ENCODE measurements at regions of chr19 and their contacts with region 1.

Region 1: GRCh38 chr19:41691268-41691970 is 3.3 kb upstream of the CEACAM7 start:
- DNase-seq: peak; percentile 66

Region 2: DNA sequence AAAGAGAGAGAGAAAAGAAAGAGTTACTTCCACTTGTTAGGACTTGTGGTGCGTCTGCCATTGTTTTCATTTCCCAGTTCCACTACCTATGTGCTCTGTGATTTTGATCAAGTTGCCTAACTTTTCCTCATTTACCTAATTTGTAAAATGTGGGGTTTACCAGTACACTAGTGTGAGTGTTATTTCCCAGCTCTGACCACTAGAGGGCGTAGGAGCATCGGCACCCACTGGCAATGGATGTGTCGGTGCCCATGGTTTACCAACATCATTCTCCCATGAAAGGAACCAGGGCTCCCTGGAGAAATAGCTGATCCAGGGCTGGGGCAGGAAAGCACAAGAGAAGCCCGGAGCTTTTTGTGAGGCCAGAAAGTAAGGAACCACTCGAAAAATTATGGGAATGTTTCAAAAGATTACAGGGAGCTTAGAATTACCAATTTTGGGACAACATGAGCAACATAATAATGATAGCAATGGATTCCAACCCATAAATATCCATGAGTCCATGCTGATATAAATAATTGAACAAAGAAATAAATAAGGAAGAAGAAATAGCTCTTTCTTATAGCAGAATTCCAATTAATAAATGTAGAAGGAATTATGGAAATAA is 49.4 kb before region 1 on chr19:
- CTCF ChIA-PET with region 1: interaction called, 12 read pairs
- POLR2A ChIA-PET with region 1: no interaction called
- DNase-seq: peak; percentile 76

Region 3: DNA sequence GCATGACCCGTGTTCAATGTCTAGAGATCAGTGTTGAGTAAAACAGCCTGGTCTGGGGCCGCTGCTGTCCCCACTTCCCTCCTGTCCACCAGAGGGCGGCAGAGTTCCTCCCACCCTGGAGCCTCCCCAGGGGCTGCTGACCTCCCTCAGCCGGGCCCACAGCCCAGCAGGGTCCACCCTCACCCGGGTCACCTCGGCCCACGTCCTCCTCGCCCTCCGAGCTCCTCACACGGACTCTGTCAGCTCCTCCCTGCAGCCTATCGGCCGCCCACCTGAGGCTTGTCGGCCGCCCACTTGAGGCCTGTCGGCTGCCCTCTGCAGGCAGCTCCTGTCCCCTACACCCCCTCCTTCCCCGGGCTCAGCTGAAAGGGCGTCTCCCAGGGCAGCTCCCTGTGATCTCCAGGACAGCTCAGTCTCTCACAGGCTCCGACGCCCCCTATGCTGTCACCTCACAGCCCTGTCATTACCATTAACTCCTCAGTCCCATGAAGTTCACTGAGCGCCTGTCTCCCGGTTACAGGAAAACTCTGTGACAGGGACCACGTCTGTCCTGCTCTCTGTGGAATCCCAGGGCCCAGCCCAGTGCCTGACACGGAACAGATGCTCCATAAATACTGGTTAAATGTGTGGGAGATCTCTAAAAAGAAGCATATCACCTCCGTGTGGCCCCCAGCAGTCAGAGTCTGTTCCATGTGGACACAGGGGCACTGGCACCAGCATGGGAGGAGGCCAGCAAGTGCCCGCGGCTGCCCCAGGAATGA is 15.5 kb after region 1 on chr19:
- CTCF ChIA-PET with region 1: interaction called, 10 read pairs
- POLR2A ChIA-PET with region 1: no interaction called
- DNase-seq: peak; percentile 88

Measured in HEK293T (cell line).